ENCODE measurements at regions of chr1 and their contacts with region 1.

Region 1: GRCh38 chr1:69998847-69999246 is 206.5 kb downstream of the LRRC40 start:
- DNase-seq: no peak
- H3K4me3 ChIP-seq: no peak overlapping the region
- CTCF ChIP-seq: no peak

Region 2: GRCh38 chr1:70044832-70045231 is 46.0 kb after region 1 on chr1:
- in situ Hi-C with region 1: loop called (anchors 5 kb)
- DNase-seq: peak; percentile 68
- H3K4me3 ChIP-seq: no peak overlapping the region
- CTCF ChIP-seq: no peak